Aorta (tissue), 5 donors: ENCODE measurements at regions of chr10 and their contacts with region 1.

Region 1: DNA sequence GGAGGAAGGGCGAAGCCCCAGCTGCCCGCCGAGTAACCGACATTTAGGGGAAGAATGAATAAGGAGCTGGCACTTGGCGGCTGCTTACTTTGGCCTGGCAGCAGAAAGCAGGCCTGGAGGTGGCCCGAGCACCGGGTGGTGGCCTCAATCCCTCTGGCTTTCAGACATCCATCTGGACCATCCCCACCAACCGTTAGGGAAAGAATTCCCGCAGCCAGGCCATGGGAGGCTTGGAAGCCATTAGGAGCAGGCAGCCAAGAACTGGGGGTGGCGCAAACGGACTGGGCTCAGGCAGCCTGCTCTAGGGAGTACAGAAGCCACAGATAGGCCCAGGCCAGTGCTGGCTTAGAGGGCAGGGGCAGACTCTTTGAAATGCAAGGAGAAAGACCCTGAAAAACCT is 132.7 kb downstream of the NEURL1 start:
- DNase-seq: peak; percentile 66 to 87
- ATAC-seq: peak; percentile 59
- H3K4me3 ChIP-seq: no peak overlapping the region
- H3K27ac ChIP-seq: no peak overlapping the region
- H3K4me1 ChIP-seq: peaks cover 0 to 2% of the 10 kb centered on the region in 2 donors
- H3K27me3 ChIP-seq: no peaks in the 10 kb centered on the region

Region 2: GRCh38 chr10:103429647-103430046 is 196.5 kb before region 1 on chr10:
- intact Hi-C with region 1: no loop called
- DNase-seq: no peak
- ATAC-seq: no peak
- H3K4me3 ChIP-seq: no peak overlapping the region
- H3K27ac ChIP-seq: no peak overlapping the region
- H3K4me1 ChIP-seq: no peaks in the 10 kb centered on the region
- H3K27me3 ChIP-seq: no peaks in the 10 kb centered on the region

Region 3: GRCh38 chr10:103691723-103692435 is 65.7 kb after region 1 on chr10:
- intact Hi-C with region 1: loop called in 1 of 2 experiments (anchors 2 kb)
- DNase-seq: no peak
- ATAC-seq: no peak
- H3K4me3 ChIP-seq: no peak overlapping the region
- H3K27ac ChIP-seq: no peak overlapping the region
- H3K4me1 ChIP-seq: no peaks in the 10 kb centered on the region
- H3K27me3 ChIP-seq: no peaks in the 10 kb centered on the region